Kidney (tissue), 22 donors: ENCODE measurements at regions of chr20 and their contacts with region 1.

Region 1: GRCh38 chr20:31951530-31952453 is at the start of gene PDRG1:
- DNase-seq: peak; percentile 96 to 99 (median 98)
- H3K4me3 ChIP-seq: peak within 1 kb of the TSS; percentile 86 to 95 (median 89)
- H3K27ac ChIP-seq: peak within 1 kb of the TSS in 1 of 2 donors; percentile 52
- H3K4me1 ChIP-seq: peaks cover 6 to 11% (median 7%) of the 10 kb centered on the region in 3 donors
- H3K27me3 ChIP-seq: no peaks in the 10 kb centered on the region
- CTCF ChIP-seq: peak; percentile 94
- total RNA-seq, gene PDRG1: 10.4 TPM

Region 2: GRCh38 chr20:31822421-31823330 is 129.1 kb before region 1 on chr20:
- intact Hi-C with region 1: loop called (anchors 10 kb)
- DNase-seq: peak; percentile 88 to 94 (median 93)
- H3K4me3 ChIP-seq: peak overlapping the region in 1 of 3 donors; percentile 17
- H3K27ac ChIP-seq: no peak overlapping the region
- H3K4me1 ChIP-seq: peaks cover 0 to 3% (median 2%) of the 10 kb centered on the region in 3 donors
- H3K27me3 ChIP-seq: no peaks in the 10 kb centered on the region
- CTCF ChIP-seq: peak; percentile 96

Region 3: GRCh38 chr20:31851240-31851955 is 100.4 kb before region 1 on chr20:
- intact Hi-C with region 1: loop called (anchors 5 kb)
- DNase-seq: no peak
- H3K4me3 ChIP-seq: no peak overlapping the region
- H3K27ac ChIP-seq: no peak overlapping the region
- H3K4me1 ChIP-seq: no peaks in the 10 kb centered on the region
- H3K27me3 ChIP-seq: peaks cover 3% of the 10 kb centered on the region
- CTCF ChIP-seq: no peak